Natural killer cell (primary cell): ENCODE measurements at regions of chr1 and their contacts with region 1.

Region 1: GRCh38 chr1:85109475-85109874 is 61.2 kb upstream of the MCOLN3 start:
- DNase-seq: peak in 1 of 2 donors; percentile 72
- ATAC-seq: peak in 1 of 3 donors; percentile 36
- H3K4me3 ChIP-seq: no peak overlapping the region
- H3K4me3 Mint-ChIP-seq: no peak overlapping the region
- H3K27ac ChIP-seq: no peak overlapping the region
- H3K27ac Mint-ChIP-seq: no peak overlapping the region
- H3K4me1 ChIP-seq: no peaks in the 10 kb centered on the region
- H3K4me1 Mint-ChIP-seq: no peaks in the 10 kb centered on the region
- H3K27me3 ChIP-seq: no peaks in the 10 kb centered on the region
- H3K27me3 Mint-ChIP-seq: peaks cover 2 to 15% of the 10 kb centered on the region in 2 donors
- CTCF ChIP-seq: no peak

Region 2: DNA sequence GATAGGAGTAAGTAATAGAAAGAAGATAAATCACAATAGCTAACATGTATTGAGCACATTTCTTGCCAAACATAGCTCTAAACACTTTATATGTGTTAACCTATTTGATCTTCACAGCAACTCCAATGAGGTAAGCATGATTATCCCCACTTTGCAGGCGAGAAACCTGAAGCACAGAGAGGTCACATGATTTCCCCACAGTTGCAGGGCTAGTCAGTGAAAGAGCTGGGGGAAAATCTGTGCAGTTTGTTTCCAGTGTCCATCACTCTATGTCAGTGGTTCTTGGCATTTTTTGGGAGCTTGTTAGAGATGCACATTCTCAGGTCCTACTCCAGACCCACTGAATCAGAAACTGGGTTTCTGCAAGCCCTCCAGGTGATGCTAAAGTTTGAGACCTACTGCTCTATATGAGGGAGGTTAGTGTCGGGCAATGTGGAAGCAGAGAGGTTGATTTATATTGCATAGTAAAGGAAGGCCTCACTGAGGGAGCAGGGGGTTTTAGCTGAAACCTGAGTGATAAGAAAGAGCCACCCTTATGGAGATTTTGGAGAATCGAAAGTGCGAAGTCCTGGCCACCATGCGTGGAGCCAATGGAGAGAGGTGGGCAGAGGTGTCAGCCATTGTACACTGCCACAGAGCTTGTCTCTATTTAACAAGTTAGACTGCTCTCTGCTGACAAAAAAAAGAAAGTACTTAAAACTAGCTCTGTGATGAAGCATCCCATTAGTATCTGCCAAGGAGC is 82.1 kb before region 1 on chr1:
- intact Hi-C with region 1: no loop called
- DNase-seq: peak in 1 of 2 donors; percentile 74
- ATAC-seq: peak; percentile 83 to 86 (median 85)
- H3K4me3 ChIP-seq: peak overlapping the region; percentile 1
- H3K4me3 Mint-ChIP-seq: peak overlapping the region; percentile 15
- H3K27ac ChIP-seq: peak overlapping the region; percentile 46
- H3K27ac Mint-ChIP-seq: peak overlapping the region; percentile 19 to 87
- H3K4me1 ChIP-seq: peaks cover 8% of the 10 kb centered on the region
- H3K4me1 Mint-ChIP-seq: peaks cover 9% of the 10 kb centered on the region in 2 donors
- H3K27me3 ChIP-seq: no peaks in the 10 kb centered on the region
- H3K27me3 Mint-ChIP-seq: peaks cover 5 to 8% of the 10 kb centered on the region in 2 donors
- CTCF ChIP-seq: no peak

Region 3: GRCh38 chr1:85259118-85259911 is 149.8 kb after region 1 on chr1 and contains the start of gene C1orf52:
- intact Hi-C with region 1: loop called (anchors 10 kb)
- DNase-seq: peak; percentile 94 to 97
- ATAC-seq: peak; percentile 96 to 100 (median 97)
- H3K4me3 ChIP-seq: peak within 1 kb of the TSS; percentile 86
- H3K4me3 Mint-ChIP-seq: peak within 1 kb of the TSS; percentile 98
- H3K27ac ChIP-seq: peak within 1 kb of the TSS; percentile 76
- H3K27ac Mint-ChIP-seq: peak within 1 kb of the TSS; percentile 94 to 98
- H3K4me1 ChIP-seq: peaks cover 20% of the 10 kb centered on the region
- H3K4me1 Mint-ChIP-seq: peaks cover 31 to 33% of the 10 kb centered on the region in 2 donors
- H3K27me3 ChIP-seq: no peaks in the 10 kb centered on the region
- H3K27me3 Mint-ChIP-seq: no peaks in the 10 kb centered on the region
- CTCF ChIP-seq: peak; percentile 99
- total RNA-seq, gene C1orf52: 50.6 to 67.3 (median 58.9) TPM